ENCODE measurements at regions of chr1 and their contacts with region 1.

Region 1: DNA sequence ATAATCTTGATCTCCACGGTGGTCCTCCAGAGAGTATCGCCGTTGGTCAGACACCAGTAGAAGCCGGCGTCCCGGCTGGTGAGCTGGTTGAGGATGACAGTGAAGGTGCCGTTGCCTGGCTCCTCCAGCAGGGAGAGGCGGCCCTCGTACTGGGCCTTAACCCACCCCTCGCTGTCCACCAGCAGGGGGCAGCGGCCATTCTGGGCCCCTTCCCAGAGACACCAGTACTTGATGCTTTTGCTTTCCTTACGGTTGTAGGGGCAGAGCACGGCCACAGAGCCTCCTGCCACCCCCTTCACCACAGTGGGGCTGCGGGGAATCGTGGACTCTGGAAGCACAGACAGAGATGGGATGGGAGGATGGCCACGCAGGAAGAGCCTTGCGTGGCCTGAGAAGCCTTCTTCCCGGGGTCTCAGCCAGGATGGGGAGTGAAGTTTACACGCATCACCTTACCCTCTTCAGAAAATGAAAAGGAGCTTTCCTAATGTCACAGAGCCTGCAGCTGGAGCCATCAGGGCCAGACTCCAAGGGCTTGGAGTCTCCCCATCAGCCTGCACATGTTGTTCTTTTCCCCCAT is 10.7 kb downstream of the PIGR start:
- DNase-seq: peak; percentile 71
- ATAC-seq: peak; percentile 58
- H3K4me3 Mint-ChIP-seq: no peak overlapping the region
- H3K27ac Mint-ChIP-seq: no peak overlapping the region
- H3K4me1 Mint-ChIP-seq: peaks cover 24% of the 10 kb centered on the region
- H3K27me3 Mint-ChIP-seq: no peaks in the 10 kb centered on the region
- CTCF ChIP-seq: peak; percentile 75

Region 2: DNA sequence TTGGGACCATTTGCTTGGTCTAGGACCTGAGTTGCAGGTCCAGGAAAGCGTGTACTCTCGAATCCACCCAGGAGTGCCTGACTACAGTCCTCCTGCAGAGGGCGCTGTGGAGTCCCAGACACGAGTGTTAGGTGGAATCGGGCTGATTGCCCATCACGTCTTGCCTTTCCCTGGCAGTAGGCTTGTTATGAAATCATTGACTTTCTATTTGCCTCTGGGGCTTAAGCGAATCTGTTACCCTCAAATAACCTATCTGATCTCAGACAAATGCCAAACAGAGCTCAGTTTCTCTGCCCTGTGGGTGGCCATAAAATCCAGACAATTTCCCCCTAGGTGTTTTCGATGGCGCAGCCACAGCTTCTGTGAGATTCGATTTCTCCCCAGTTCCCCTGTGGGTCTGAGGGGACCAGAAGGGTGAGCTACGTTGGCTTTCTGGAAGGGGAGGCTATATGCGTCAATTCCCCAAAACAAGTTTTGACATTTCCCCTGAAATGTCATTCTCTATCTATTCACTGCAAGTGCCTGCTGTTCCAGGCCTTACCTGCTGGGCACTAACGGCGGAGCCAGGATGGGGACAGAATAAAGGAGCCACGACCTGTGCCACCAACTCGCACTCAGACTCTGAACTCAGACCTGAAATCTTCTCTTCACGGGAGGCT is 70.4 kb before region 1 on chr1 and contains the start of gene IL20:
- CTCF ChIA-PET with region 1: interaction called, 17 read pairs
- POLR2A ChIA-PET with region 1: interaction called, 3 read pairs
- intact Hi-C with region 1: no loop called
- DNase-seq: peak; percentile 92
- ATAC-seq: peak; percentile 97
- H3K4me3 Mint-ChIP-seq: no peak within 1 kb of the TSS
- H3K27ac Mint-ChIP-seq: no peak within 1 kb of the TSS
- H3K4me1 Mint-ChIP-seq: peaks cover 12% of the 10 kb centered on the region
- H3K27me3 Mint-ChIP-seq: peaks cover 2% of the 10 kb centered on the region
- CTCF ChIP-seq: peak; percentile 98
- total RNA-seq, gene IL20: not detected

Region 3: DNA sequence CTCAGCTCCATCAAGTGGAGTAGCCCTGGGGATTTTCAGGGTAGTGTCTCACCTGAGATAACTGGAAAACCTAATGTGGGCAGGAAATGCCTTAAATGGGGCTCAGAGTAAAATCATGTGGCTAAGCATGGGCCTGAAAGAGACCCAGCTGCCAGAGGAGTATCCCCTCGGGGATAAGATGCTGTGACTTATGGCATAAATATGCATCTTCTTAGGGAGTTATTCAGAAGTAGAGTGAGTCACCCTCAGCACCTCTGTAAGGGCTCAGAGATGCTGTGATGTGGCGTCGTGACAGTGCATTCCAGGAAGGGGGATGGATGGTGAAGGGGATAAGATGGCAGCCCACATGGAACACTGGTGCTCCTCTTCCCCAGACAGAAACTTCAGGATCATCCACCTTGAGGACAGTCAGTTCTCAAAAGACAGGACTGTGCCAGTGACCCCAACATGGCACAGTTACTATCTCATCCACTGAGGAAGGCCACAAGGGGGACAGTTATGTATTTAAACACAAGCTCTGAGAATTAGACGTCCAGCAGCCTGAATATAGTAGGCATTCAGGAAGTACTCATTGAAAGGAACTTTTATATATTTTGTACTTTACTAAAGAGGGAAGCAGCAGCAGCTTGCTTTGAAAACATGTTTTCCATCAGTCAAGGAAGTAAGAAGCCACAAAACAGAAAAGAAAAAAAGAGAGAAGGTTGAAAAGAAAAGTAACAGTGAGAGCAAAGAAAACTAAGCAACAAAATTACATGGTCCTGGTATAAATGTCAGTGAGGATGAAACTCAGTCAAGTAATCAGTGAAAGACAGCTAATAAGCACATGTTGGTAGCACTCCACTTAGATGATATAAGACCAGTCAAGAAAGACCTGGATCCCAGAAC is 30.1 kb before region 1 on chr1:
- CTCF ChIA-PET with region 1: interaction called, 23 read pairs
- POLR2A ChIA-PET with region 1: interaction called, 4 read pairs
- intact Hi-C with region 1: no loop called
- DNase-seq: peak; percentile 70
- ATAC-seq: peak; percentile 90
- H3K4me3 Mint-ChIP-seq: peak overlapping the region; percentile 34
- H3K27ac Mint-ChIP-seq: peak overlapping the region; percentile 96
- H3K4me1 Mint-ChIP-seq: peaks cover 79% of the 10 kb centered on the region
- H3K27me3 Mint-ChIP-seq: no peaks in the 10 kb centered on the region
- CTCF ChIP-seq: no peak

Region 4: GRCh38 chr1:206967096-206967849 is 31.7 kb after region 1 on chr1:
- CTCF ChIA-PET with region 1: interaction called, 13 read pairs
- POLR2A ChIA-PET with region 1: no interaction called
- intact Hi-C with region 1: no loop called
- DNase-seq: no peak
- ATAC-seq: no peak
- H3K4me3 Mint-ChIP-seq: no peak overlapping the region
- H3K27ac Mint-ChIP-seq: peak overlapping the region; percentile 11
- H3K4me1 Mint-ChIP-seq: peaks cover 31% of the 10 kb centered on the region
- H3K27me3 Mint-ChIP-seq: peaks cover 6% of the 10 kb centered on the region
- CTCF ChIP-seq: no peak